Endothelial cell of umbilical vein (primary cell): ENCODE measurements at regions of chr20 and their contacts with region 1.

Region 1: GRCh38 chr20:22684072-22684762 is 99.8 kb upstream of the FOXA2 start:
- DNase-seq: peak; percentile 76
- H3K4me3 ChIP-seq: no peak overlapping the region
- H3K27ac ChIP-seq: no peak overlapping the region
- H3K4me1 ChIP-seq: peaks cover 20% of the 10 kb centered on the region
- H3K27me3 ChIP-seq: peaks cover 10% of the 10 kb centered on the region in 2 experiments
- CTCF ChIP-seq: peak; percentile 78 to 89
- POLR2A ChIP-seq: no peak

Region 2: GRCh38 chr20:21719592-21720214 is 964.5 kb before region 1 on chr20:
- CTCF ChIA-PET with region 1: interaction called, 11 read pairs
- POLR2A ChIA-PET with region 1: no interaction called
- dilution Hi-C with region 1: no loop called
- intact Hi-C with region 1: no loop called
- DNase-seq: peak; percentile 67
- H3K4me3 ChIP-seq: no peak overlapping the region
- H3K27ac ChIP-seq: no peak overlapping the region
- H3K4me1 ChIP-seq: no peaks in the 10 kb centered on the region
- H3K27me3 ChIP-seq: peaks cover 15 to 17% of the 10 kb centered on the region in 2 experiments
- CTCF ChIP-seq: peak; percentile 44 to 59
- POLR2A ChIP-seq: no peak

Region 3: GRCh38 chr20:22333885-22334545 is 350.2 kb before region 1 on chr20:
- CTCF ChIA-PET with region 1: interaction called, 136 read pairs
- POLR2A ChIA-PET with region 1: no interaction called
- dilution Hi-C with region 1: loop called (anchors 25 kb)
- intact Hi-C with region 1: loop called (anchors 1 kb)
- DNase-seq: peak; percentile 62
- H3K4me3 ChIP-seq: no peak overlapping the region
- H3K27ac ChIP-seq: no peak overlapping the region
- H3K4me1 ChIP-seq: no peaks in the 10 kb centered on the region
- H3K27me3 ChIP-seq: peaks cover 0 to 5% of the 10 kb centered on the region in 2 experiments
- CTCF ChIP-seq: peak; percentile 63 to 79
- POLR2A ChIP-seq: no peak

Region 4: DNA sequence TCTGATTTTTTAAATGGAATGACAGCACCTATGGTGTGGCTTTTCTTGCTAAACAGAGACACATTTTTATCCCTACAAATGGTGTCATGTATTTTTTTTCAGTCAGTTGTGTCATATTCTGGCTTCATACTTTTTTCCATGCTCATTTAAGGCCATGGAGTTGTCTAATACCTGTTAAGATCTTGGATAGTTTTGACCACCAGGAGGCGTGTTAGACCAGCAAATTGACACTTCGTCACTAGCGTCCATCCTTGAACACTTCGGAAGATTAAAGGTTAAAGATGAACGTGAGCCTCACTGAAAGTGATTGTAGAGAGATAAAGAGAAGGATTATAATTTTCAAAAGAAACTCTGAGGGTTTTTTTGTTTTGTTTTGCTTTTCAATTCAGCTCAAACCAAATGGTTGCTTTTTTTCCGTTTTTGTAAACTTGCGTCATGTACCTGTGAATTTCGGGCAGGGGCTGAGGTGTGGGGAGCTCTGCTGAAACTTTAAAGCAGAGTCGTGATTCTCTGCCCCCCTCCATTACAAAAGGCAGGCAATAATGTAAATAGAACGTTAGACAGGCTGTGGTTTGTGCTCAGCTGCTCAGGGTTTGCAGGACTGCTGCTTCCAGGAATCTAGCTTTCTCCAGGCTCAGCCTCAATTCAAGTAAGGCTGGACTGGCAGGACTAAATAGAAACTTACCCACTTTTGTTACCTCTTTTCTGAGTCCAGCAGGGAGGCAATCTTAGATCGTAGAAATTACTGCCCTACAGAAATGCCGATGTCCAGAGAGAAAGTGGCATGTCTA is 344.9 kb before region 1 on chr20:
- CTCF ChIA-PET with region 1: interaction called, 136 read pairs
- POLR2A ChIA-PET with region 1: no interaction called
- dilution Hi-C with region 1: loop called (anchors 25 kb)
- intact Hi-C with region 1: loop called (anchors 1 kb)
- DNase-seq: peak; percentile 64
- H3K4me3 ChIP-seq: no peak overlapping the region
- H3K27ac ChIP-seq: no peak overlapping the region
- H3K4me1 ChIP-seq: no peaks in the 10 kb centered on the region
- H3K27me3 ChIP-seq: peaks cover 5 to 10% of the 10 kb centered on the region in 2 experiments
- CTCF ChIP-seq: peak; percentile 60 to 61
- POLR2A ChIP-seq: no peak

Region 5: DNA sequence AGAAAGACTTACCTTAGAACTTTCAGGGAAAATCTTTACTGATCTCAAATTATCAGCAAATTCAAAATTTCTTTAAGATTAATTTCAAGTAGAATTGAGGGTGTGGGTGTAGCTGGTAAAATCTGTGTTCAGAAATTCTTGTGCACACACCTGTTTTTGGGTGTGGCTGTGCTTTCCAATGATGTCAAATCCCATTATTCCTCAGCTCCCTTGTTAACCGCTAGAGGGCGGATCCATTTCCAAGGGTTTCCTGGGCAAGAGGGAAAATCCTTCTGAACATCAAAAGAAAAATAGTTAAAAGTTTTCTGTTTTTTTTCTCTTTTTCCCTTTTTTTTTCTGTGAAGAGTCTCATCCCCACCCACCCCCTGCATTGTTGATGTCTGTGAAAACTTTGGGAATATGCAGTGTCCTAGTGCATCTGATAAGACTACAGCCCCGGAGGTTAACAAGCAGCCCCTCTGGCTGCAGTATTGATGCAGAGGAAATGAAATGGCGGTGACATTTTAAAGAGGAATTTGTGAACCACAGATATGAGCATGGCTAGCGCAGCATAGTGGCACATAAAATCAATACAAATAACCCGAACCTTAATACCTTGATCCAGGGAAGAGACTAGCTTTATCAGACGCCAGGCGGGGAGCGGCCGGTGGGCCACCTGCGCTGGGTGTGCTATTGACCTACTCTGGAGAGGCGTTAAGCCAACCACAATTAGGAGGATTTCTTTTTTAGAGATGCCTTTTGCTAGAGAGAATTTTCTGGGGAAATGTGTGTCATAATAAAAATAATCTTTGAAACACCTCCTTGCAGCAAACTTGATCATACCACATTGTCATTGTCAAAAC is 230.8 kb before region 1 on chr20:
- CTCF ChIA-PET with region 1: interaction called, 7 read pairs
- POLR2A ChIA-PET with region 1: no interaction called
- dilution Hi-C with region 1: no loop called
- intact Hi-C with region 1: loop called (anchors 1 kb)
- DNase-seq: peak; percentile 11
- H3K4me3 ChIP-seq: no peak overlapping the region
- H3K27ac ChIP-seq: no peak overlapping the region
- H3K4me1 ChIP-seq: no peaks in the 10 kb centered on the region
- H3K27me3 ChIP-seq: peaks cover 0 to 2% of the 10 kb centered on the region in 2 experiments
- CTCF ChIP-seq: peak; percentile 55 to 64
- POLR2A ChIP-seq: no peak

Region 6: DNA sequence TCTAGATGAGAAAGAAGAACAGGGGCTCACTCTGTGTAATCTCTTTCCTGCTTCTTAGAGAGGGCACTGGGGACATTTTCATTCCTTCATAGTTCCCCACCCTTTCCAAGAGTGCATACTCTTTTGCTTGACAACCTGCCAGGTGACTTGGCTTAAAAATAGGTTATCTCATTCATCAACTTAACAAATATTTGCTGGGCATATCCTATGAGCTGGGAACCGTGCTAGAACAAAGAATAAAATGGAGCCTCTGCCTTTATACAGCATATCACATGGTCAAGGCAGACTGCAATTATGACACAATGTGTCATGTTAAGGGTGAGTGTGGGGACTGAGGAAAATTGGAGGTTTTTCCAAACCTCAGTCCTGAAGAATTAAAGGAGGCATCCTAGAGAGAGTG is 110.0 kb after region 1 on chr20:
- CTCF ChIA-PET with region 1: no interaction called
- POLR2A ChIA-PET with region 1: no interaction called
- dilution Hi-C with region 1: no loop called
- intact Hi-C with region 1: no loop called
- DNase-seq: peak; percentile 40
- H3K4me3 ChIP-seq: no peak overlapping the region
- H3K27ac ChIP-seq: peak overlapping the region; percentile 100
- H3K4me1 ChIP-seq: peaks cover 43% of the 10 kb centered on the region
- H3K27me3 ChIP-seq: no peaks in the 10 kb centered on the region
- CTCF ChIP-seq: no peak
- POLR2A ChIP-seq: no peak

Region 7: GRCh38 chr20:23420943-23421931 is 737.0 kb after region 1 on chr20 and contains the start of gene NAPB:
- CTCF ChIA-PET with region 1: no interaction called
- POLR2A ChIA-PET with region 1: no interaction called
- dilution Hi-C with region 1: no loop called
- intact Hi-C with region 1: loop called (anchors 10 kb)
- DNase-seq: peak; percentile 93
- H3K4me3 ChIP-seq: peak within 1 kb of the TSS; percentile 86 to 90 (median 88)
- H3K27ac ChIP-seq: peak within 1 kb of the TSS; percentile 22
- H3K4me1 ChIP-seq: peaks cover 8% of the 10 kb centered on the region
- H3K27me3 ChIP-seq: peaks cover 4 to 7% of the 10 kb centered on the region in 2 experiments
- CTCF ChIP-seq: peak; percentile 14 to 51
- POLR2A ChIP-seq: peak; percentile 91
- total RNA-seq, gene NAPB: 8.1 and 10.1 TPM in 2 replicates

Region 8: GRCh38 chr20:23606652-23607049 is 922.4 kb after region 1 on chr20:
- CTCF ChIA-PET with region 1: no interaction called
- POLR2A ChIA-PET with region 1: no interaction called
- dilution Hi-C with region 1: no loop called
- intact Hi-C with region 1: loop called (anchors 10 kb)
- DNase-seq: peak; percentile 67
- H3K4me3 ChIP-seq: no peak overlapping the region
- H3K27ac ChIP-seq: no peak overlapping the region
- H3K4me1 ChIP-seq: no peaks in the 10 kb centered on the region
- H3K27me3 ChIP-seq: peaks cover 8% of the 10 kb centered on the region in 2 experiments
- CTCF ChIP-seq: peak; percentile 86 to 90
- POLR2A ChIP-seq: no peak